ENCODE measurements at regions of chr4 and their contacts with region 1.

Region 1: GRCh38 chr4:20684852-20685763 is 15.2 kb upstream of the PACRGL start:
- DNase-seq: peak in 2 of 9 experiments; percentile 14 to 33
- ATAC-seq: no peak
- H3K4me3 ChIP-seq: no peak overlapping the region
- H3K4me3 Mint-ChIP-seq: no peak overlapping the region
- H3K27ac ChIP-seq: no peak overlapping the region
- H3K27ac Mint-ChIP-seq: no peak overlapping the region
- H3K4me1 ChIP-seq: no peaks in the 10 kb centered on the region
- H3K4me1 Mint-ChIP-seq: no peaks in the 10 kb centered on the region
- H3K27me3 ChIP-seq: no peaks in the 10 kb centered on the region
- H3K27me3 Mint-ChIP-seq: peaks cover 14% of the 10 kb centered on the region
- CTCF ChIP-seq: peak; percentile 89

Region 2: GRCh38 chr4:18689308-18690115 is 1995.6 kb before region 1 on chr4:
- CTCF ChIA-PET with region 1: interaction called, 8 read pairs
- POLR2A ChIA-PET with region 1: no interaction called
- intact Hi-C with region 1: loop called in 1 of 2 experiments (anchors 1 kb)
- DNase-seq: peak in 7 of 9 experiments; percentile 2 to 43 (median 17)
- ATAC-seq: no peak
- H3K4me3 ChIP-seq: no peak overlapping the region
- H3K4me3 Mint-ChIP-seq: no peak overlapping the region
- H3K27ac ChIP-seq: no peak overlapping the region
- H3K27ac Mint-ChIP-seq: no peak overlapping the region
- H3K4me1 ChIP-seq: no peaks in the 10 kb centered on the region
- H3K4me1 Mint-ChIP-seq: no peaks in the 10 kb centered on the region
- H3K27me3 ChIP-seq: no peaks in the 10 kb centered on the region
- H3K27me3 Mint-ChIP-seq: peaks cover 2% of the 10 kb centered on the region
- CTCF ChIP-seq: peak; percentile 93

Region 3: GRCh38 chr4:20395160-20395773 is 289.8 kb before region 1 on chr4:
- CTCF ChIA-PET with region 1: interaction called, 3 read pairs
- POLR2A ChIA-PET with region 1: no interaction called
- intact Hi-C with region 1: loop called in 1 of 2 experiments (anchors 1 kb)
- DNase-seq: peak in 4 of 9 experiments; percentile 11 to 24 (median 18)
- ATAC-seq: no peak
- H3K4me3 ChIP-seq: no peak overlapping the region
- H3K4me3 Mint-ChIP-seq: no peak overlapping the region
- H3K27ac ChIP-seq: no peak overlapping the region
- H3K27ac Mint-ChIP-seq: no peak overlapping the region
- H3K4me1 ChIP-seq: no peaks in the 10 kb centered on the region
- H3K4me1 Mint-ChIP-seq: no peaks in the 10 kb centered on the region
- H3K27me3 ChIP-seq: no peaks in the 10 kb centered on the region
- H3K27me3 Mint-ChIP-seq: no peaks in the 10 kb centered on the region
- CTCF ChIP-seq: no peak

Region 4: GRCh38 chr4:20422398-20422797 is 262.7 kb before region 1 on chr4:
- CTCF ChIA-PET with region 1: interaction called, 10 read pairs
- POLR2A ChIA-PET with region 1: no interaction called
- intact Hi-C with region 1: loop called in 1 of 2 experiments (anchors 2 kb)
- DNase-seq: peak in 3 of 9 experiments; percentile 12 to 48 (median 46)
- ATAC-seq: peak; percentile 55
- H3K4me3 ChIP-seq: no peak overlapping the region
- H3K4me3 Mint-ChIP-seq: no peak overlapping the region
- H3K27ac ChIP-seq: no peak overlapping the region
- H3K27ac Mint-ChIP-seq: no peak overlapping the region
- H3K4me1 ChIP-seq: no peaks in the 10 kb centered on the region
- H3K4me1 Mint-ChIP-seq: peaks cover 4% of the 10 kb centered on the region
- H3K27me3 ChIP-seq: no peaks in the 10 kb centered on the region
- H3K27me3 Mint-ChIP-seq: no peaks in the 10 kb centered on the region
- CTCF ChIP-seq: no peak

Region 5: DNA sequence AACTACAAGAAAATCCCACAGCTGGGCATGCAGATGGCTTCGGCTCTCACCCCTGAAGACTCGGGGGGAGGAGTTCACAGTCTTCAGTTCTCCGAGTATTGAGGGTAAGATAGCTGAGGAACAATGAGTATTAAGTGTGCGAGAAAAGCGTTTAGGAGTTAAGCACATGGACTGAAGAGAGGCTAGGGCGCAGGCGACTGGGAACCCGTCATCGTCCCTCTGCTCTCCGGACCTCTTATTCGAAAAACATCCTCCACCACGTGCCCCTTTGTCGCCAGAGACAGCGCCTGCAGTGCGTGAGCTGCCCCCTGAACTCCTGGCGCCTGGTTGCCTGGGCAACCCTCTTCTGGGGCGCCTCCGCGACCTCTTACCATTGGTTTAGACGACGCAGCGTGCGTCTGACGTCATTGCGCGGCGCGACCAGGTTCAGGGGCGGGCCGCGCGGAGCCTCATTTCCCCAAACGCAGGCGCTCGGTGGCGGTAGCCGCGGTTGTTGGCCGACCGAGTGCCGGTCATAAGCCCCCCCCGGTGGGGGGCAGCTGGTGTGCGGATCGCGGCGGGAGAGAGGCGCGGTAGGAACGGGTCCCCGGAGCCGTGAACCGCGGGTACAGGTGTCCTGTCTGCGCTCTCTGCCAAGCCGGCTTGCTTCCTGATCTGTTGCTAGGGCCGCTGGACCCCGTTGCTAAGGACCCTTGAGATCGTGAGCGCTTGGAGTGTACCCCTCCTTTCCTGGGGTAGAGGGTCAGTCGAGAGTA is 15.1 kb after region 1 on chr4 and contains the start of gene PACRGL:
- CTCF ChIA-PET with region 1: interaction called, 18 read pairs
- POLR2A ChIA-PET with region 1: interaction called, 3 read pairs
- intact Hi-C with region 1: loop called in 1 of 2 experiments (anchors 1 kb)
- DNase-seq: peak; percentile 85 to 97 (median 94)
- ATAC-seq: peak; percentile 97
- H3K4me3 ChIP-seq: peak within 1 kb of the TSS; percentile 72 to 91
- H3K4me3 Mint-ChIP-seq: peak within 1 kb of the TSS; percentile 94
- H3K27ac ChIP-seq: peak within 1 kb of the TSS; percentile 84 to 85
- H3K27ac Mint-ChIP-seq: peak within 1 kb of the TSS; percentile 97
- H3K4me1 ChIP-seq: peaks cover 15% of the 10 kb centered on the region
- H3K4me1 Mint-ChIP-seq: peaks cover 37% of the 10 kb centered on the region
- H3K27me3 ChIP-seq: no peaks in the 10 kb centered on the region
- H3K27me3 Mint-ChIP-seq: no peaks in the 10 kb centered on the region
- CTCF ChIP-seq: no peak
- total RNA-seq, gene PACRGL: 7.0 to 7.3 TPM